Activated CD4-positive, alpha-beta T cell treated with anti-CD3 and anti-CD28 coated beads, Interleukin-2, amount 10 ng/mL, durations not matched to agents 24 days and 14 days (primary cell): ENCODE measurements at regions of chr3 and their contacts with region 1.

Region 1: GRCh38 chr3:113736548-113737089 is 9.4 kb downstream of the NAA50 start:
- DNase-seq: peak; percentile 81
- H3K4me3 Mint-ChIP-seq: no peak overlapping the region
- H3K27ac Mint-ChIP-seq: peak overlapping the region; percentile 20
- H3K4me1 Mint-ChIP-seq: peaks cover 43% of the 10 kb centered on the region
- H3K27me3 Mint-ChIP-seq: no peaks in the 10 kb centered on the region

Region 2: GRCh38 chr3:113795693-113796092 is 59.1 kb after region 1 on chr3:
- intact Hi-C with region 1: loop called (anchors 5 kb)
- DNase-seq: no peak
- H3K4me3 Mint-ChIP-seq: no peak overlapping the region
- H3K27ac Mint-ChIP-seq: no peak overlapping the region
- H3K4me1 Mint-ChIP-seq: no peaks in the 10 kb centered on the region
- H3K27me3 Mint-ChIP-seq: no peaks in the 10 kb centered on the region

Region 3: GRCh38 chr3:113912552-113913236 is 176.1 kb after region 1 on chr3:
- intact Hi-C with region 1: loop called (anchors 2 kb)
- DNase-seq: peak; percentile 77
- H3K4me3 Mint-ChIP-seq: peak overlapping the region; percentile 53
- H3K27ac Mint-ChIP-seq: no peak overlapping the region
- H3K4me1 Mint-ChIP-seq: peaks cover 3% of the 10 kb centered on the region
- H3K27me3 Mint-ChIP-seq: peaks cover 13% of the 10 kb centered on the region

Region 4: GRCh38 chr3:115052906-115053305 is 1316.3 kb after region 1 on chr3:
- intact Hi-C with region 1: no loop called
- DNase-seq: no peak
- H3K4me3 Mint-ChIP-seq: no peak overlapping the region
- H3K27ac Mint-ChIP-seq: no peak overlapping the region
- H3K4me1 Mint-ChIP-seq: no peaks in the 10 kb centered on the region
- H3K27me3 Mint-ChIP-seq: no peaks in the 10 kb centered on the region